CD4-positive, alpha-beta memory T cell (primary cell): ENCODE measurements at regions of chr16 and their contacts with region 1.

Region 1: GRCh38 chr16:9008601-9009260 is 45.0 kb upstream of the USP7 start:
- DNase-seq: peak; percentile 51 to 64 (median 56)
- H3K4me3 ChIP-seq: no peak overlapping the region
- H3K4me3 Mint-ChIP-seq: peak overlapping the region in 1 of 8 donors; percentile 45
- H3K27ac ChIP-seq: no peak overlapping the region
- H3K27ac Mint-ChIP-seq: no peak overlapping the region
- H3K4me1 ChIP-seq: peaks cover 7% of the 10 kb centered on the region
- H3K4me1 Mint-ChIP-seq: peaks cover 0 to 6% (median under 1%) of the 10 kb centered on the region in 4 donors
- H3K27me3 ChIP-seq: no peaks in the 10 kb centered on the region
- H3K27me3 Mint-ChIP-seq: peaks cover 1 to 16% of the 10 kb centered on the region in 2 donors

Region 2: GRCh38 chr16:8567750-8568617 is 440.7 kb before region 1 on chr16:
- CTCF ChIA-PET with region 1: interaction called, 18 read pairs
- POLR2A ChIA-PET with region 1: no interaction called
- intact Hi-C with region 1: loop called (anchors 1 kb)
- DNase-seq: peak; percentile 71 to 82 (median 80)
- H3K4me3 ChIP-seq: no peak overlapping the region
- H3K4me3 Mint-ChIP-seq: peak overlapping the region in 4 of 8 donors; percentile 14 to 41 (median 28)
- H3K27ac ChIP-seq: no peak overlapping the region
- H3K27ac Mint-ChIP-seq: peak overlapping the region in 5 of 7 donors; percentile 48 to 83 (median 62)
- H3K4me1 ChIP-seq: no peaks in the 10 kb centered on the region
- H3K4me1 Mint-ChIP-seq: peaks cover 4 to 10% (median 7%) of the 10 kb centered on the region in 4 donors
- H3K27me3 ChIP-seq: no peaks in the 10 kb centered on the region
- H3K27me3 Mint-ChIP-seq: peaks cover 0 to 16% of the 10 kb centered on the region in 2 donors

Region 3: GRCh38 chr16:8885674-8886592 is 122.8 kb before region 1 on chr16:
- CTCF ChIA-PET with region 1: interaction called, 21 read pairs
- POLR2A ChIA-PET with region 1: no interaction called
- intact Hi-C with region 1: loop called (anchors 1 kb)
- DNase-seq: no peak
- H3K4me3 ChIP-seq: no peak overlapping the region
- H3K4me3 Mint-ChIP-seq: peak overlapping the region in 1 of 8 donors; percentile 17
- H3K27ac ChIP-seq: no peak overlapping the region
- H3K27ac Mint-ChIP-seq: peak overlapping the region in 5 of 7 donors; percentile 29 to 76 (median 62)
- H3K4me1 ChIP-seq: peaks cover under 1% of the 10 kb centered on the region
- H3K4me1 Mint-ChIP-seq: peaks cover 7 to 21% (median 12%) of the 10 kb centered on the region in 4 donors
- H3K27me3 ChIP-seq: no peaks in the 10 kb centered on the region
- H3K27me3 Mint-ChIP-seq: peaks cover 6 to 9% of the 10 kb centered on the region in 2 donors

Region 4: GRCh38 chr16:8905168-8905762 is 103.5 kb before region 1 on chr16:
- CTCF ChIA-PET with region 1: interaction called, 12 read pairs
- POLR2A ChIA-PET with region 1: no interaction called
- intact Hi-C with region 1: loop called (anchors 1 kb)
- DNase-seq: peak in 3 of 5 donors; percentile 16 to 27 (median 23)
- H3K4me3 ChIP-seq: no peak overlapping the region
- H3K4me3 Mint-ChIP-seq: no peak overlapping the region
- H3K27ac ChIP-seq: no peak overlapping the region
- H3K27ac Mint-ChIP-seq: peak overlapping the region in 4 of 7 donors; percentile 17 to 87 (median 30)
- H3K4me1 ChIP-seq: peaks cover 13% of the 10 kb centered on the region
- H3K4me1 Mint-ChIP-seq: peaks cover 14 to 19% (median 16%) of the 10 kb centered on the region in 4 donors
- H3K27me3 ChIP-seq: no peaks in the 10 kb centered on the region
- H3K27me3 Mint-ChIP-seq: no peaks in the 10 kb centered on the region

Region 5: GRCh38 chr16:8989099-8989878 is 19.4 kb before region 1 on chr16:
- CTCF ChIA-PET with region 1: interaction called, 16 read pairs
- POLR2A ChIA-PET with region 1: no interaction called
- intact Hi-C with region 1: no loop called
- DNase-seq: no peak
- H3K4me3 ChIP-seq: no peak overlapping the region
- H3K4me3 Mint-ChIP-seq: no peak overlapping the region
- H3K27ac ChIP-seq: no peak overlapping the region
- H3K27ac Mint-ChIP-seq: peak overlapping the region in 1 of 7 donors; percentile 48
- H3K4me1 ChIP-seq: no peaks in the 10 kb centered on the region
- H3K4me1 Mint-ChIP-seq: peaks cover 0 to 2% (median 0%) of the 10 kb centered on the region in 4 donors
- H3K27me3 ChIP-seq: no peaks in the 10 kb centered on the region
- H3K27me3 Mint-ChIP-seq: peaks cover 2 to 3% of the 10 kb centered on the region in 2 donors

Region 6: GRCh38 chr16:9112166-9112843 is 103.6 kb after region 1 on chr16:
- CTCF ChIA-PET with region 1: no interaction called
- POLR2A ChIA-PET with region 1: no interaction called
- intact Hi-C with region 1: no loop called
- DNase-seq: no peak
- H3K4me3 ChIP-seq: no peak overlapping the region
- H3K4me3 Mint-ChIP-seq: peak overlapping the region in 7 of 8 donors; percentile 29 to 59 (median 39)
- H3K27ac ChIP-seq: no peak overlapping the region
- H3K27ac Mint-ChIP-seq: peak overlapping the region; percentile 13 to 81 (median 33)
- H3K4me1 ChIP-seq: peaks cover 89% of the 10 kb centered on the region
- H3K4me1 Mint-ChIP-seq: peaks cover 71 to 95% (median 85%) of the 10 kb centered on the region in 4 donors
- H3K27me3 ChIP-seq: no peaks in the 10 kb centered on the region
- H3K27me3 Mint-ChIP-seq: no peaks in the 10 kb centered on the region

Region 7: GRCh38 chr16:9134739-9135138 is 126.0 kb after region 1 on chr16:
- CTCF ChIA-PET with region 1: interaction called, 39 read pairs
- POLR2A ChIA-PET with region 1: interaction called, 3 read pairs
- intact Hi-C with region 1: loop called (anchors 10 kb)
- DNase-seq: peak in 4 of 5 donors; percentile 38 to 46 (median 46)
- H3K4me3 ChIP-seq: no peak overlapping the region
- H3K4me3 Mint-ChIP-seq: peak overlapping the region in 1 of 8 donors; percentile 62
- H3K27ac ChIP-seq: no peak overlapping the region
- H3K27ac Mint-ChIP-seq: peak overlapping the region in 4 of 7 donors; percentile 39 to 82 (median 55)
- H3K4me1 ChIP-seq: peaks cover 18% of the 10 kb centered on the region
- H3K4me1 Mint-ChIP-seq: peaks cover 9 to 26% (median 19%) of the 10 kb centered on the region in 4 donors
- H3K27me3 ChIP-seq: no peaks in the 10 kb centered on the region
- H3K27me3 Mint-ChIP-seq: peaks cover 0 to 2% of the 10 kb centered on the region in 2 donors